Aorta (tissue), 5 donors: ENCODE measurements at regions of chr9 and their contacts with region 1.

Region 1: GRCh38 chr9:21110708-21111576 is 30.7 kb downstream of the IFNW1 start:
- DNase-seq: no peak
- ATAC-seq: peak; percentile 83
- H3K4me3 ChIP-seq: no peak overlapping the region
- H3K27ac ChIP-seq: no peak overlapping the region
- H3K4me1 ChIP-seq: no peaks in the 10 kb centered on the region
- H3K27me3 ChIP-seq: no peaks in the 10 kb centered on the region

Region 2: DNA sequence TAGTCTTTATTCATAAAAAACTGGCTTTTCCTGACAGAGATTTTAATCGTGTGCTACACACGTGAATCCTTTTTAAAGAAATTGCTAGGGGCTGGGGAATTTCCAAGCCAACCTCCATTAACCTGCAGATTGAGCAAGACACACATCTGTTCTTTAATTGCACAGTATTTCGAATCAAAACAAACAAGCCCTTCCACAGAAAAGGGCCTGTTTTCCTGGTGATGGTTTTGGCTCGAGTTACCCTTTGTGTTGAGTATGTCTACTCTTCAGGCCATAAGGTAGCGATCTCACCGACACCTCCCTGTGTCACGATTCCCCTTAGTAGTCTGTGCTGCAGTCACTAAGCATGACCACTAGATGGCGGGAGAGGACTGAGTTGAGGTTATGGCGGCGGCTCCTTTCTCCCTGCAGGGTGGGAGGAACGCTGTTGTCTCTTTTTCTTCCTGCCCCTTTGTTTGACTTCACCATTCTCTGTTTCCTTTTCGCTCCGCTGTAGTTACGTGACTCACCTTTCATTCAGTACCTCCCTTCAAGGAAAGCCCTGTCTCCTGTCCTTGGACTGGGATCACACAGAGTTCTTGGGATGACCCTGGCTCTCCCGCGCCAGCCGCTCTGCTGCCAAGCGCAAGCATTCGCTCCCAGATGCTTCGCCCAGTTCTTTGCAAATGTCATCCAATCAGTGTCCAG is 1185.0 kb before region 1 on chr9:
- intact Hi-C with region 1: loop called in 1 of 2 experiments (anchors 5 kb)
- DNase-seq: peak in 1 of 2 donors; percentile 69
- ATAC-seq: peak; percentile 92
- H3K4me3 ChIP-seq: peak overlapping the region in 1 of 2 donors; percentile 6
- H3K27ac ChIP-seq: no peak overlapping the region
- H3K4me1 ChIP-seq: no peaks in the 10 kb centered on the region
- H3K27me3 ChIP-seq: no peaks in the 10 kb centered on the region

Region 3: DNA sequence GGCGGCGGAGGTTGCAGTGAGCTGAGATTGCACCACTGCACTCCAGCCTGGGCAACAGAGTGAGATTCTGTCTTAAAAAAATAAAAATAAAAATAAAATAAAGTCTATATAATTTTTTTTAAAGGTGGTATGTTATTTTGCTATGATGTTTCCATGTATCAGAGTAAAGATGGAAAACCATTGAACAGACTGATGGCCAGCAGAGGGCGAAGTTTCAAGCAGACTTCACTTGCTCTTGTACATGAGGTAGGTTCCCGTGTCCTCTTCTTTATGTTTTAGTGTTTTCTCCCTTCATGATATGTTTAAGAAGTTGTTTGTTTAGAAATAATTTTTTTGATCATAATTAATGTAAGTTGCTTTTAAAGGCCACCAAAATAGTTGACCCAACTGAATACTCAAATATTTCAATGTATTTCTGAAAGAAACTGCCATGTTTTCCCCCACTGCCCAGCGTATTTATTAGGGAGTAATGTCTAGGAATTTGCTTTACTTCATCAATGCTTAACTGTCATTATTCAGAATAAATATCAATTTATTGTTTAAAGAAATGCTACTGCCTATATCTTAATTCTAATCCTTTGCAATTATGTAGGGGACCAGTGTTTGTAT is 225.9 kb before region 1 on chr9:
- intact Hi-C with region 1: loop called (anchors 2 to 5 kb)
- DNase-seq: peak; percentile 75 to 82
- ATAC-seq: no peak
- H3K4me3 ChIP-seq: no peak overlapping the region
- H3K27ac ChIP-seq: no peak overlapping the region
- H3K4me1 ChIP-seq: no peaks in the 10 kb centered on the region
- H3K27me3 ChIP-seq: no peaks in the 10 kb centered on the region

Region 4: GRCh38 chr9:20903212-20903611 is 207.7 kb before region 1 on chr9:
- intact Hi-C with region 1: loop called in 1 of 2 experiments (anchors 5 kb)
- DNase-seq: no peak
- ATAC-seq: no peak
- H3K4me3 ChIP-seq: no peak overlapping the region
- H3K27ac ChIP-seq: no peak overlapping the region
- H3K4me1 ChIP-seq: no peaks in the 10 kb centered on the region
- H3K27me3 ChIP-seq: no peaks in the 10 kb centered on the region

Region 5: GRCh38 chr9:20941174-20941690 is 169.7 kb before region 1 on chr9:
- intact Hi-C with region 1: loop called in 1 of 2 experiments (anchors 5 kb)
- DNase-seq: peak in 1 of 2 donors; percentile 44
- ATAC-seq: peak; percentile 87
- H3K4me3 ChIP-seq: no peak overlapping the region
- H3K27ac ChIP-seq: no peak overlapping the region
- H3K4me1 ChIP-seq: peaks cover 0 to 2% of the 10 kb centered on the region in 2 donors
- H3K27me3 ChIP-seq: no peaks in the 10 kb centered on the region

Region 6: DNA sequence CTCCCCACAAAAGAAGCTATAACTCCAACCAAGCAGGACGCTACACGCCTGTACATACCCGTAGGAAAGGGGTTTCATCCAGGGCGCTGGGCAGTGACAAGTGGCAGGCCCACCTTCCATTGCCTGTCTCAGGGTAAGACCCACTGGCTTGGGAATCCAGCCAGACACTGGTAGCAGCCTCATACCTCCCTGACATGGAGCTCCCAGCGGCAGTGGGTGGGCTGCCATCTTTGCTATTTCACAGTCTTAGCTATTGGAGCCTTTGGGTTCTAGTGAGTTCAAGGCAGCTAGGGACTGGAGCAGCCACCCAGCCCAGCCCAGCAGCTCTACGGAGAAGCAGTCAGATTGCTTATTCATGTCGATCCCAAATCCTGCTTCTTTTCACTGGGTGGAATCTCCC is 99.4 kb after region 1 on chr9:
- intact Hi-C with region 1: no loop called
- DNase-seq: peak in 1 of 2 donors; percentile 41
- ATAC-seq: no peak
- H3K4me3 ChIP-seq: no peak overlapping the region
- H3K27ac ChIP-seq: no peak overlapping the region
- H3K4me1 ChIP-seq: no peaks in the 10 kb centered on the region
- H3K27me3 ChIP-seq: no peaks in the 10 kb centered on the region